Aorta (tissue), 5 donors: ENCODE measurements at regions of chr9 and their contacts with region 1.

Region 1: DNA sequence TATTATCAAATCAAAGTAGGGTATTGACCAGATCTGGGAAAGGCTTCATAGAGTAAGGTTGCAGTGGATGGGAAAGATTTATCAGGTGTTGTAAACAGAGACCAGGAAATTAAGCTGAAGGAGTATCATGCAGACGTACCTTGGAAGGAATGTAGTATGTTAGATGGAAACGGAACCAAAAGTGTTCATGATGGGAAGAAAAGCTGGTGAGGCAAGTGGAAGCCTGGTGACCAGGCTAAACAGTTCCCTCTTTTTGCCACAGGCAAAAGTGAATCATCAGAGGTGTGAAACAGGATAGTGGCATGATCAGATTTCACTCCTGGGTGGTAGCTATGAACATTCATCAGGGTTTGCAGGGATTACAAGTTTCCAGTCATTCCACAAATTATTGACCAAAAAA is 780.1 kb upstream of the DMAC1 start:
- DNase-seq: no peak
- ATAC-seq: no peak
- H3K4me3 ChIP-seq: no peak overlapping the region
- H3K27ac ChIP-seq: no peak overlapping the region
- H3K4me1 ChIP-seq: no peaks in the 10 kb centered on the region
- H3K27me3 ChIP-seq: no peaks in the 10 kb centered on the region

Region 2: GRCh38 chr9:8301296-8301695 is 278.4 kb before region 1 on chr9:
- intact Hi-C with region 1: no loop called
- DNase-seq: no peak
- ATAC-seq: no peak
- H3K4me3 ChIP-seq: no peak overlapping the region
- H3K27ac ChIP-seq: no peak overlapping the region
- H3K4me1 ChIP-seq: no peaks in the 10 kb centered on the region
- H3K27me3 ChIP-seq: no peaks in the 10 kb centered on the region

Region 3: DNA sequence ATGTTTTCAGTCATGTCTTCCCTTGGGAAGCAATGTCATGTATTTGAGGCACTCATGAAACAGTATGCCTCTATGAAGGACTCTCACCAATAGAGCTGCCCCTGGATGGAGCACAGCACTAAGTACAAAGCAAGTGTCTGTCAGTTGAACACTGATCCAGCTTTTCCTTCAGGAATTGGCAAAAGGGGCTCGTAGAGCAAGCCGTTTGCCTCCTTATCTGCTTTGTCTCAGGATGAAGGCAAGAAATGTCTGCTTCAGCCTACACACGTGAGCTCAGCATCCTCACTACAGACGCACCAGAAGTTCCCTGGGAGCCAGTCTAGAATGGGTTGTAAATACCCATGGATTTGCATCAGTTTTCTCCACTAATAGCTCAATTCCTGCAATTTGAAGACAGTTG is 37.1 kb before region 1 on chr9:
- intact Hi-C with region 1: no loop called
- DNase-seq: no peak
- ATAC-seq: no peak
- H3K4me3 ChIP-seq: no peak overlapping the region
- H3K27ac ChIP-seq: no peak overlapping the region
- H3K4me1 ChIP-seq: no peaks in the 10 kb centered on the region
- H3K27me3 ChIP-seq: no peaks in the 10 kb centered on the region

Region 4: GRCh38 chr9:8649160-8649559 is 69.5 kb after region 1 on chr9:
- intact Hi-C with region 1: loop called in 1 of 2 experiments (anchors 10 kb)
- DNase-seq: no peak
- ATAC-seq: no peak
- H3K4me3 ChIP-seq: no peak overlapping the region
- H3K27ac ChIP-seq: no peak overlapping the region
- H3K4me1 ChIP-seq: peaks cover 3% of the 10 kb centered on the region in 2 donors
- H3K27me3 ChIP-seq: no peaks in the 10 kb centered on the region